ENCODE measurements at regions of chr6 and their contacts with region 1.

Region 1: GRCh38 chr6:157873735-157874344 is 50.8 kb downstream of the SNX9 start:
- DNase-seq: peak; percentile 66
- CTCF ChIP-seq: peak; percentile 92

Region 2: GRCh38 chr6:157021344-157021992 is 852.4 kb before region 1 on chr6:
- in situ Hi-C with region 1: no loop called
- DNase-seq: peak; percentile 91
- CTCF ChIP-seq: peak; percentile 40

Region 3: DNA sequence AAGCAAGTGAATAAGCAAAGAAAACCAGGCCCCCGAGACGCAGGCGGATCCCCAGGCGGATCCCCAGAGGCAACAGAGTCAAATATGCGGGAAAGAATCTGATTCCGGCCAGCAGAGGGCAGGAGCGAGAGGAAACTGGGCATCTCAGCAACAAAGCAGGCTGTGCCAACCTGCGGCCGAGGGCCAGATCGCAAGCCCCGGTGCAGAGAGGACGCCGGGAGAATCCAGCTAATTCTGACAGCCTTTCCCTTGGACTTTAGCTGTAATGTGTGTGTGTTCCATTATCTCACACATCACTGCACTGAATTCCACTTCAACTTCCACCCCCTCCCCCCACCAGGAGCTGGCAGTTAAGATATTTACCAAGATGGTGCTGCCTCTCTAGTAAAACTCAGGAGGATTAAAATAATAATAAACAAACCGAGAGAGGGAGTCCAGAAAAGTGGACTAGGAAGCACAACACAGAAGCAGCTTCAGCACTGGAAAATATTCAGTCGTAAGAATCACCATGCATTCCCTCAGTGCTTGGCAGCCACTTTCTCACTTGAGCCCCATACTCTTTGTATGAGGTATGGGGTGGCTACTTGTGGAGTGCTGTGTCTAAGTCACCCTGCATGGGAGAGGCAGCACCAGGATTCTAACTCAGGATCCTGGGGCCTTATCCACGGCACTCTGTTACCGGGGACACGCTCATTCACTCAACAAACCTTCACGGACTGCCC is 117.0 kb before region 1 on chr6:
- in situ Hi-C with region 1: loop called (anchors 10 kb)
- DNase-seq: peak; percentile 53
- CTCF ChIP-seq: peak; percentile 77

Region 4: DNA sequence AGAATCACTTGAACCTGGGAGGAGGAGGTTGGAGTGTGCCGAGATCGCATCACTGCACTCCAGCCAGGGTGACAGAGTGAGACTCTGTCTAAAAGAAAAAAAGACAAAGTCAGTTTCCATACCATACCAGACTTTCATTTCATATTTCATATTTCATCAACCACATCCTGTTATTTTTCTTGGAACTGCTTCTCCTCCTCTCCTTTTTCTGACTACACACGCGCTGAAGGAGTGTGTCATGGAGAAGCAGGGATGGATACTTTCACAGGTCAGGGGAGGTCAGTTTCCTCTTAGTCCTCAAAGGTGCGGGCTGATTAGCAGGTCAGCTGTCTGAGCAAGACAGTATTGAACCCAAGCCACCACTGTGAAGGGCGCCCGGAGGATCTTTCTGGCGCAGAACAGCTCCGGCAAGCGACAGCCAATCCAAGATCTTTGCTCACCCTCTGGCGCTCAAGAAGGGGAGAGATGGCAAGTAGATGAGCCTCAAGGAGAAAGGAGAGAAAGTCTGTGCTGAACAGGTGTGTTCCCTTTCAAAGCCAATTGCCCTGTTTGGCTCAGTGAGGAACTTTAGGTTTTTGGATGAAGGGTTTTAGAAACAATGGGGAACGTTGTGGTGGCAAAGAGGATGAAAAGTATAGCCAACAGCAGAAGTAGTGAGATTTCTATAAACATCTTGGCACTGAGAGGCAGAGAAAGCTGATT is 88.9 kb after region 1 on chr6:
- in situ Hi-C with region 1: no loop called
- DNase-seq: no peak
- CTCF ChIP-seq: no peak

Region 5: GRCh38 chr6:158270389-158271127 is 396.7 kb after region 1 on chr6:
- in situ Hi-C with region 1: no loop called
- DNase-seq: no peak
- CTCF ChIP-seq: no peak

Measured in GM13977 (cell line).